Caco-2 (cell line): ENCODE measurements at regions of chr13 and their contacts with region 1.

Region 1: GRCh38 chr13:114110091-114110829 is 22.2 kb downstream of the RASA3 start:
- DNase-seq: peak in 1 of 2 experiments; percentile 34
- H3K4me3 ChIP-seq: no peak overlapping the region
- H3K4me3 Mint-ChIP-seq: no peak overlapping the region
- H3K27ac Mint-ChIP-seq: no peak overlapping the region
- H3K4me1 ChIP-seq: peaks cover 3% of the 10 kb centered on the region; the same call in 1 of the 2 replicates
- H3K4me1 Mint-ChIP-seq: peaks cover 1% of the 10 kb centered on the region
- H3K27me3 ChIP-seq: no peaks in the 10 kb centered on the region
- H3K27me3 Mint-ChIP-seq: no peaks in the 10 kb centered on the region
- CTCF ChIP-seq: no peak

Region 2: GRCh38 chr13:114065141-114065925 is 44.9 kb before region 1 on chr13:
- CTCF ChIA-PET with region 1: no interaction called
- POLR2A ChIA-PET with region 1: no interaction called
- intact Hi-C with region 1: loop called (anchors 10 kb)
- DNase-seq: peak; percentile 68 to 77
- H3K4me3 ChIP-seq: peak overlapping the region; percentile 42
- H3K4me3 Mint-ChIP-seq: peak overlapping the region; percentile 70
- H3K27ac Mint-ChIP-seq: peak overlapping the region; percentile 69
- H3K4me1 ChIP-seq: peaks cover 11% of the 10 kb centered on the region
- H3K4me1 Mint-ChIP-seq: no peaks in the 10 kb centered on the region
- H3K27me3 ChIP-seq: no peaks in the 10 kb centered on the region
- H3K27me3 Mint-ChIP-seq: no peaks in the 10 kb centered on the region
- CTCF ChIP-seq: no peak

Region 3: GRCh38 chr13:114148521-114148855 is 38.2 kb after region 1 on chr13:
- CTCF ChIA-PET with region 1: no interaction called
- POLR2A ChIA-PET with region 1: no interaction called
- intact Hi-C with region 1: no loop called
- DNase-seq: no peak
- H3K4me3 ChIP-seq: no peak overlapping the region
- H3K4me3 Mint-ChIP-seq: no peak overlapping the region
- H3K27ac Mint-ChIP-seq: no peak overlapping the region
- H3K4me1 ChIP-seq: no peaks in the 10 kb centered on the region
- H3K4me1 Mint-ChIP-seq: no peaks in the 10 kb centered on the region
- H3K27me3 ChIP-seq: no peaks in the 10 kb centered on the region
- H3K27me3 Mint-ChIP-seq: peaks cover 6% of the 10 kb centered on the region
- CTCF ChIP-seq: no peak